IMR-90 (cell line): ENCODE measurements at regions of chr17 and their contacts with region 1.

Region 1: DNA sequence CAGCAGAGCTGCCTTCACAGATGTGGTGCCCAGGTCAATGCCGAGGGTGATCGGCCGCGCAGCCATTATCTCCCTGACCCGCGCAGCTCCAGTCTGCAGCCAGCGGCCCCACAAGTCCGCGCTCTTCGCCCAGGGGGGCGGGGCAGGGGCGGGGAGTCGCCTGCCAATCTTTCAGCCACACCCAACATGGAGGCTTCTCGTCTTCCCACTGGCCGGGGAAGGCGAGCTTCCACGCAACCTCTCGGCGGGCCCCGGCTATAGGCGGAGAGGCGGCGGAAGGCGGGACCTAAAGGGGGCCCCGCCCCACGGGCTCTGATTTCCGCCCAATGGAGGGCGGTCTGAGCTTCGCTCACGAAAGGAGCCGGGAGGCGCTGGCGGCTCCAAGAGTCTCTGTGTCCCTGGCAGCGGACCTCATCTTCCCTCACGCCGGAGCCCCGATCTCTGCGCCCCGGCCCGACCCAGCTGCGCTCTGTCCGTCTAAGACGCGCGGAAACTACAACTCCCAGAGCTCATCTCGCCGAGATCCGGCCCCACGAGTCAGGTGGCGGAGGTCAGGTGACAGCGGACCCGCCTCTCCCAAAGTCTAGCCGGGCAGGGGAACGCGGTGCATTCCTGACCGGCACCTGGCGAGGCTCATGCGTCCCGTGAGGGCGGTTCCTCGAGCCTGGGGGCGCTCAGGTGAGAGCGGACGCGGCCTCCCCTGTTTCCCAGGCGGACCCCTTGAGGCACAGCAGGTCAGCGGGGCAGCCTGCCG is at the starts of genes CTNS and SHPK:
- DNase-seq: peak; percentile 94
- ATAC-seq: peak; percentile 98
- H3K4me3 ChIP-seq: peak within 1 kb of the TSS; percentile 88
- H3K27ac ChIP-seq: peak within 1 kb of the TSS; percentile 93
- H3K4me1 ChIP-seq: peaks cover 6% of the 10 kb centered on the region
- H3K27me3 ChIP-seq: no peaks in the 10 kb centered on the region
- CTCF ChIP-seq: no peak
- POLR2A ChIP-seq: no peak; the same call in 1 of the 2 replicates
- RAD21 ChIP-seq: no peak
- total RNA-seq, gene CTNS: 4.7 and 6.9 TPM in 2 replicates
- total RNA-seq, gene SHPK: 12.8 and 14.3 TPM in 2 replicates

Region 2: DNA sequence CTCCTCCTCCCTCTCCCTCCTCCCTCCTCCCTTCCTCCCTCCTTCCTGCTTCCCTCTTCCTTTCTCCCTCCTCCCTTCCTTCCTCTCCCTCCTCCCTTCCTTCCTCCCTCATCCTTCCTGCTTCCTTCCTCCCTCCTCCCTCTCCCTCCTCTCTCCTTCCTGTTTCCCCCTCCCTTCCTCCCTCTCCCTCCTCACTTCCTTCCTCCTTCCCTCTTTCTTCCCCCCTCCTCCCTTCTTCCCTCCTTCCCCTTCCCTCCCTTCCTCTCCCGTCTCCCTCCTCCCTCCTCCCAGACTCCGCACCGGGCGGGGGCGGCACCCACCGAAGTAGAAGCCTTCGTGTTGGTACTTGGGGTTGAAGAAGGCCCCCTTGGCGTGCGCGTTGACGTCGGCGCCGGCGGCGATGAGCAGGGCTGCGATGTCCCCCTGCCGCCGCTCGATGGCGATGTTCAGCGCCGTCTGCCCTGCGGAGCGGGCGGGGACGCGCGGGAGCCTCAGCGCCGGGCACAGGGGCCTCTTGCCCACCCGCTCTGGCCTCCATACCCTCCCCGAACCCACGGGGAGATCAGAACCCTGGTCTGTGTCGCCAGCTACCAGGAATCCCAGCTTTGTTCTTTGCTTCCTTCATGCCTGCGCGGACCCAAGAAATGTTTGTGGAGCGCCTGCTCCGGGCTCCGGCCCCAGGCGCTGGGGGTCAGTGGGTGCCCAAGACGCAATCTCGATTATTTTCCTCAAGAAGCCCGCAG is 100.9 kb before region 1 on chr17:
- CTCF ChIA-PET with region 1: no interaction called
- POLR2A ChIA-PET with region 1: no interaction called
- dilution Hi-C with region 1: no loop called
- in situ Hi-C with region 1: no loop called
- intact Hi-C with region 1: loop called (anchors 5 kb)
- DNase-seq: peak; percentile 62
- ATAC-seq: peak; percentile 97
- H3K4me3 ChIP-seq: peak overlapping the region; percentile 46
- H3K27ac ChIP-seq: no peak overlapping the region
- H3K4me1 ChIP-seq: peaks cover 3% of the 10 kb centered on the region; the same call in 1 of the 2 replicates
- H3K27me3 ChIP-seq: peaks cover 3% of the 10 kb centered on the region; the same call in 1 of the 2 replicates
- CTCF ChIP-seq: peak; percentile 71
- POLR2A ChIP-seq: no peak
- RAD21 ChIP-seq: peak; percentile 60

Region 3: GRCh38 chr17:3668279-3669085 is 32.2 kb after region 1 on chr17 and contains the starts of genes EMC6 and TAX1BP3:
- CTCF ChIA-PET with region 1: no interaction called
- POLR2A ChIA-PET with region 1: no interaction called
- dilution Hi-C with region 1: no loop called
- in situ Hi-C with region 1: no loop called
- intact Hi-C with region 1: no loop called
- DNase-seq: peak; percentile 96
- ATAC-seq: peak; percentile 89
- H3K4me3 ChIP-seq: peak within 1 kb of the TSS; percentile 71
- H3K27ac ChIP-seq: peak within 1 kb of the TSS; percentile 93
- H3K4me1 ChIP-seq: peaks cover 10% of the 10 kb centered on the region
- H3K27me3 ChIP-seq: no peaks in the 10 kb centered on the region
- CTCF ChIP-seq: no peak
- POLR2A ChIP-seq: peak; percentile 99
- RAD21 ChIP-seq: no peak
- total RNA-seq, gene EMC6: 10.8 and 10.9 TPM in 2 replicates
- total RNA-seq, gene TAX1BP3: 146 and 170 TPM in 2 replicates